Activated T-helper 1 cell treated with anti-CD3 and anti-CD28 coated beads, Interleukin-12 subunit alpha, Interleukin-12 subunit beta, Interleukin-2, Interleukin-4 antibody, amounts not matched to agents 30 ng/mL and 10 ng/mL and 1 ng/mL, durations not matched to agents 14 hours and 24 hours and 36 hours (primary cell): ENCODE measurements at regions of chr13 and their contacts with region 1.

Region 1: GRCh38 chr13:48769107-48769704 is 115.5 kb downstream of the CYSLTR2 start:
- DNase-seq: peak; percentile 76
- H3K4me3 Mint-ChIP-seq: no peak overlapping the region
- H3K27ac Mint-ChIP-seq: no peak overlapping the region
- H3K4me1 Mint-ChIP-seq: peaks cover 19% of the 10 kb centered on the region
- H3K27me3 Mint-ChIP-seq: peaks cover 34% of the 10 kb centered on the region

Region 2: GRCh38 chr13:46893798-46894560 is 1875.2 kb before region 1 on chr13:
- intact Hi-C with region 1: loop called (anchors 2 kb)
- DNase-seq: peak; percentile 49
- H3K4me3 Mint-ChIP-seq: peak overlapping the region; percentile 76
- H3K27ac Mint-ChIP-seq: no peak overlapping the region
- H3K4me1 Mint-ChIP-seq: peaks cover 7% of the 10 kb centered on the region
- H3K27me3 Mint-ChIP-seq: peaks cover 65% of the 10 kb centered on the region

Region 3: GRCh38 chr13:48037346-48038173 is 731.6 kb before region 1 on chr13 and contains the start of gene NUDT15:
- intact Hi-C with region 1: loop called (anchors 1 kb)
- DNase-seq: peak; percentile 94
- H3K4me3 Mint-ChIP-seq: peak within 1 kb of the TSS; percentile 98
- H3K27ac Mint-ChIP-seq: peak within 1 kb of the TSS; percentile 99
- H3K4me1 Mint-ChIP-seq: peaks cover 46% of the 10 kb centered on the region
- H3K27me3 Mint-ChIP-seq: no peaks in the 10 kb centered on the region
- total RNA-seq, gene NUDT15: 15.3 and 16.8 TPM in 2 replicates

Region 4: GRCh38 chr13:48334534-48335127 is 434.6 kb before region 1 on chr13:
- intact Hi-C with region 1: loop called (anchors 1 kb)
- DNase-seq: no peak
- H3K4me3 Mint-ChIP-seq: no peak overlapping the region
- H3K27ac Mint-ChIP-seq: no peak overlapping the region
- H3K4me1 Mint-ChIP-seq: peaks cover 13% of the 10 kb centered on the region
- H3K27me3 Mint-ChIP-seq: no peaks in the 10 kb centered on the region

Region 5: GRCh38 chr13:48580185-48580803 is 188.9 kb before region 1 on chr13:
- intact Hi-C with region 1: loop called (anchors 5 kb)
- DNase-seq: peak; percentile 44
- H3K4me3 Mint-ChIP-seq: no peak overlapping the region
- H3K27ac Mint-ChIP-seq: no peak overlapping the region
- H3K4me1 Mint-ChIP-seq: peaks cover 16% of the 10 kb centered on the region
- H3K27me3 Mint-ChIP-seq: peaks cover 63% of the 10 kb centered on the region

Region 6: DNA sequence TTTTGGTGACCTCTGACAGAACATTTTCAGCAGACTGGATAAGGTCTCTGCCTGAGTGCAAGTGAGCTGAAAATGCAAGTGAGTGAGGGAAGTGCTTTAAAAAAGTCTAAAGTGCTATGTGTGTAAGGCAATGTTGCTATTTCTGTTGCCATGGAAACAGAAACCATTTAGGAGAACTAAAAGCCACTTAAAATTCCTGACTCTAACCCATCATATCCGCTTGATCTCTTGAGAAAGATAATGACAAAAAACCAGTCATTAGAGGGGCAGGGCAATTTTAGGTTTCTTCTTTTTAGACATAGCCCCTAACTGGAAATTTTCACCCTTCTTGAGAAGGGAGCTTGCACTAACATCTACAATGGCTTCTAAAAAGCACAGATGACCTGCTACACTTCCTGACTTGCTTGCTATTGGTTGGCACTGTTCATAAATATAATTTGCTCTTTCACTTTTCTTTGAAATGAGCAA is 115.7 kb before region 1 on chr13 and contains the start of gene CYSLTR2:
- intact Hi-C with region 1: loop called (anchors 5 kb)
- DNase-seq: peak; percentile 27
- H3K4me3 Mint-ChIP-seq: peak within 1 kb of the TSS; percentile 78
- H3K27ac Mint-ChIP-seq: peak within 1 kb of the TSS; percentile 83
- H3K4me1 Mint-ChIP-seq: peaks cover 26% of the 10 kb centered on the region
- H3K27me3 Mint-ChIP-seq: no peaks in the 10 kb centered on the region
- total RNA-seq, gene CYSLTR2: 0.75 and 0.78 TPM in 2 replicates

Region 7: GRCh38 chr13:48749699-48750473 is 19.3 kb before region 1 on chr13:
- intact Hi-C with region 1: loop called (anchors 1 kb)
- DNase-seq: peak; percentile 23
- H3K4me3 Mint-ChIP-seq: no peak overlapping the region
- H3K27ac Mint-ChIP-seq: peak overlapping the region; percentile 10
- H3K4me1 Mint-ChIP-seq: peaks cover 16% of the 10 kb centered on the region
- H3K27me3 Mint-ChIP-seq: no peaks in the 10 kb centered on the region